Body of pancreas (tissue), 4 donors: ENCODE measurements at regions of chr16 and their contacts with region 1.

Region 1: GRCh38 chr16:3983081-3983520 is 102.6 kb upstream of the CREBBP start:
- DNase-seq: peak; percentile 82 to 87 (median 86)
- ATAC-seq: peak; percentile 92
- H3K4me3 ChIP-seq: no peak overlapping the region
- H3K27ac ChIP-seq: no peak overlapping the region
- H3K4me1 ChIP-seq: peaks cover 2% of the 10 kb centered on the region
- H3K27me3 ChIP-seq: no peaks in the 10 kb centered on the region
- CTCF ChIP-seq: peak; percentile 59 to 91 (median 85)
- POLR2A ChIP-seq: no peak

Region 2: GRCh38 chr16:4116337-4117249 is 133.5 kb after region 1 on chr16 and contains the start of gene ADCY9:
- intact Hi-C with region 1: loop called (anchors 10 kb)
- DNase-seq: peak; percentile 80 to 87 (median 82)
- ATAC-seq: peak; percentile 90
- H3K4me3 ChIP-seq: peak within 1 kb of the TSS; percentile 74 to 79
- H3K27ac ChIP-seq: peak within 1 kb of the TSS; percentile 29 to 79 (median 76)
- H3K4me1 ChIP-seq: peaks cover 39% of the 10 kb centered on the region
- H3K27me3 ChIP-seq: no peaks in the 10 kb centered on the region
- CTCF ChIP-seq: peak in 1 of 7 experiments; percentile 13
- POLR2A ChIP-seq: peak in 2 of 3 donors; percentile 59 to 67
- total RNA-seq, gene ADCY9: 22.4 to 29.1 TPM

Region 3: DNA sequence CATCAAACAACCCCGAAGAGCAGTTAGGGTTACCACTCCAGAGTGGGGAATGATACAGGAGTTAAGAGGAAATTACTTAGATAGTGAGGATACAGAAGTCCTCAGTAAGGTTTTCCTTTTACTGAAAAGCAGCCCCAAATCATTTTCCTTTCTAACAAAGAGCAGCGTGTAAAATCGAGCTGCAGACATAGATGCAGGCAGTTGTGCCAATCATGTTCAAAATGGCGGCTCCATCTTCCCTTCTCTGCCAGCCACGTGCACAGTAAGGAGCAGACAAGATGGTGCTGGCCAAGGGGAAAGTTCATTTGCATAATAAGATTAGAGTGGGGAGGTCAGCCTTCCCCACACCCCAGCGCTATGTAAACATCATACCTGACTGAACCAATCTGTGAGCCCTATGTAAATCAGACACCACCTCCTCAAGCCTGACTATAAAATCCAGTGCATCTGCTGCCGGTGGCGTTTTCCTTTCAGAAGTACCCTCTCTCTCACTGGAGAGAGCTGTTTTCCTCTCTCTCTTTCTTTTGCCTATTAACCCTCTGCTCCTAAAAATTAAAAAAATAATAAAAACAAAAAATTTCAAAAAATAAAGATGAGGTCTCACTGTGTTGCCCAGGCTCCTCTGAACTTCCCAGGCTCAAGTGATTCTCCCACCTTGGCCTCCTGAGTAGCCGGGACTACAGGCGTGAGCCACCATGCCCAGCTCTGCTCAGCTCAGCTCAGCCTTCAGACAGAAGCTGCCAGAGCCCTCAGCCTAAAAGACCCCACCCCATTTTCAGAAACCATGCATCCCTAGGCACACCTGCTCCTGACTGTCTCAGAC is 261.4 kb after region 1 on chr16:
- intact Hi-C with region 1: loop called (anchors 10 kb)
- DNase-seq: peak; percentile 36 to 79 (median 58)
- ATAC-seq: peak; percentile 74
- H3K4me3 ChIP-seq: no peak overlapping the region
- H3K27ac ChIP-seq: no peak overlapping the region
- H3K4me1 ChIP-seq: no peaks in the 10 kb centered on the region
- H3K27me3 ChIP-seq: no peaks in the 10 kb centered on the region
- CTCF ChIP-seq: no peak
- POLR2A ChIP-seq: peak in 2 of 3 donors; percentile 55 to 74